ENCODE measurements at regions of chr12 and their contacts with region 1.

Region 1: DNA sequence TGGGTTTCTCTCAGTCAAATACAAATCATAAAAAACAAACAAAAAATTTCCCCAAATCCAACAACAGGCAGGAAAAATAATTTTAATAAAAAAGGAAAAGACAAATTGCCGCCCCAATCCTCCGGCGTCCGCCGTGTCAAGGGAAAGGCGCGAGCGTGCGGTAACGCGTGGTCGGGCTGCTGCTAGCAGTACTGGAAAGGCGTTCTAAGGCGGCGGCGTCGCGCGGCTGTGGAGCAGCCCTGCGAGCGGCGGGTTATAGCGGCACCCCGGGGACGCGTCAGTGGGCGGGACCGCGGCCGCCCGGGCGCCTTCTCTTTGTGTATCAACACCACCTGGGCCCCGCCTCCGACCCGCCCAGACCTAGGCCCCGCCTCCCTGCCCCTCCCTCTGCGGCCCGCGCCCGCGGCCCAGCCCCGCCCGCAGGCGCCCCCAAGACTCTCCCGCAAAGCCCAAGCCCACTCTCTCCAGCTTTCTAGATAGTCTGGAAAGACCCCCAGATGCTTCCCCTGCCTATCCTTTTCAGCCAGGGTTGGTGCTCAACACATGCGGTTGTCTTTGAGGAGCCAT is at the start of gene SLC38A2:
- DNase-seq: peak; percentile 96 to 99
- H3K4me3 ChIP-seq: peak within 1 kb of the TSS; percentile 83
- H3K4me3 Mint-ChIP-seq: peak within 1 kb of the TSS; percentile 76
- H3K27ac Mint-ChIP-seq: peak within 1 kb of the TSS; percentile 100
- H3K4me1 ChIP-seq: peaks cover 45% of the 10 kb centered on the region
- H3K4me1 Mint-ChIP-seq: peaks cover 35% of the 10 kb centered on the region
- H3K27me3 ChIP-seq: no peaks in the 10 kb centered on the region
- H3K27me3 Mint-ChIP-seq: no peaks in the 10 kb centered on the region
- CTCF ChIP-seq: no peak
- total RNA-seq, gene SLC38A2: 317 and 331 TPM in 2 replicates

Region 2: GRCh38 chr12:46332260-46332659 is 40.4 kb before region 1 on chr12:
- CTCF ChIA-PET with region 1: no interaction called
- POLR2A ChIA-PET with region 1: no interaction called
- intact Hi-C with region 1: no loop called
- DNase-seq: no peak
- H3K4me3 ChIP-seq: no peak overlapping the region
- H3K4me3 Mint-ChIP-seq: no peak overlapping the region
- H3K27ac Mint-ChIP-seq: no peak overlapping the region
- H3K4me1 ChIP-seq: no peaks in the 10 kb centered on the region
- H3K4me1 Mint-ChIP-seq: no peaks in the 10 kb centered on the region
- H3K27me3 ChIP-seq: no peaks in the 10 kb centered on the region
- H3K27me3 Mint-ChIP-seq: peaks cover 7% of the 10 kb centered on the region
- CTCF ChIP-seq: no peak

Region 3: GRCh38 chr12:46382964-46383653 is 10.5 kb after region 1 on chr12:
- CTCF ChIA-PET with region 1: no interaction called
- POLR2A ChIA-PET with region 1: interaction called, 5 read pairs
- intact Hi-C with region 1: loop called (anchors 1 kb)
- DNase-seq: peak; percentile 97 to 98
- H3K4me3 ChIP-seq: peak overlapping the region; percentile 94
- H3K4me3 Mint-ChIP-seq: peak overlapping the region; percentile 77
- H3K27ac Mint-ChIP-seq: peak overlapping the region; percentile 99
- H3K4me1 ChIP-seq: peaks cover 47% of the 10 kb centered on the region
- H3K4me1 Mint-ChIP-seq: peaks cover 38% of the 10 kb centered on the region
- H3K27me3 ChIP-seq: no peaks in the 10 kb centered on the region
- H3K27me3 Mint-ChIP-seq: no peaks in the 10 kb centered on the region
- CTCF ChIP-seq: peak in 1 of 2 experiments; percentile 17

Region 4: DNA sequence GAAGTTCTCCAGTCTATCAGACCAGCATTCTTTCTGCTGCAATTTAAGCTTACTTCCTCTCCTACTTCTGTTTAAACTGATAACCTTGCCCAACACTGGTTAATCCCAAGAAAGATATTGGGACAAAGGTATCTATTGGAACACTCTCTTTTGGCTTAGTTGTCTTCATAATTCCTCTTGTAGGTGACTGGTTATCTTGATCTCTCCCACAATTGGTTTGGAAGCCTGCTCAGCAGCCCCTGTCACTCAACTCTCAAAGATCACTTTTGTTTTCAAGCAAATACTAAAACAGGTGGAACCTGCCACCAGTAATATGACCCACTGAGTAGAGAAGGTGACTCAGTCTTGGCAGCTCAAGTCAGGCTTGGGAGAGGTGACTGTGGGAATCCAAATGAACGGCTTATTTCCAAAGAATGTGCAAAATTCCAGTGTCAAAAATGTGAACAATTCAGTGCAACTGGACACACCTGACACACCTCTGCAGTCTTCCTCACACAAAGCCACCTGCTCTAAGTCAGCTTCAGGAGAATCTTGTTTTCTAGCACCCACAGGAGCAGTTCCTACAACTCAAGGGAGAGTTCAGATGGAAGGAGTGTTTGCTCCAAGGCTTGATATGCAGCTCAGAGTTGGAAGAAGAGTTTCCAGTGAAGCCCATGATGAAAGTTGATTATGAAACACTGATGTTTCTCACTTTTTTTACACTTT is 83.2 kb after region 1 on chr12:
- CTCF ChIA-PET with region 1: no interaction called
- POLR2A ChIA-PET with region 1: interaction called, 4 read pairs
- intact Hi-C with region 1: loop called (anchors 1 kb)
- DNase-seq: peak; percentile 84 to 87
- H3K4me3 ChIP-seq: no peak overlapping the region
- H3K4me3 Mint-ChIP-seq: peak overlapping the region; percentile 32
- H3K27ac Mint-ChIP-seq: peak overlapping the region; percentile 65
- H3K4me1 ChIP-seq: peaks cover 58% of the 10 kb centered on the region
- H3K4me1 Mint-ChIP-seq: peaks cover 46% of the 10 kb centered on the region
- H3K27me3 ChIP-seq: no peaks in the 10 kb centered on the region
- H3K27me3 Mint-ChIP-seq: no peaks in the 10 kb centered on the region
- CTCF ChIP-seq: no peak

Region 5: DNA sequence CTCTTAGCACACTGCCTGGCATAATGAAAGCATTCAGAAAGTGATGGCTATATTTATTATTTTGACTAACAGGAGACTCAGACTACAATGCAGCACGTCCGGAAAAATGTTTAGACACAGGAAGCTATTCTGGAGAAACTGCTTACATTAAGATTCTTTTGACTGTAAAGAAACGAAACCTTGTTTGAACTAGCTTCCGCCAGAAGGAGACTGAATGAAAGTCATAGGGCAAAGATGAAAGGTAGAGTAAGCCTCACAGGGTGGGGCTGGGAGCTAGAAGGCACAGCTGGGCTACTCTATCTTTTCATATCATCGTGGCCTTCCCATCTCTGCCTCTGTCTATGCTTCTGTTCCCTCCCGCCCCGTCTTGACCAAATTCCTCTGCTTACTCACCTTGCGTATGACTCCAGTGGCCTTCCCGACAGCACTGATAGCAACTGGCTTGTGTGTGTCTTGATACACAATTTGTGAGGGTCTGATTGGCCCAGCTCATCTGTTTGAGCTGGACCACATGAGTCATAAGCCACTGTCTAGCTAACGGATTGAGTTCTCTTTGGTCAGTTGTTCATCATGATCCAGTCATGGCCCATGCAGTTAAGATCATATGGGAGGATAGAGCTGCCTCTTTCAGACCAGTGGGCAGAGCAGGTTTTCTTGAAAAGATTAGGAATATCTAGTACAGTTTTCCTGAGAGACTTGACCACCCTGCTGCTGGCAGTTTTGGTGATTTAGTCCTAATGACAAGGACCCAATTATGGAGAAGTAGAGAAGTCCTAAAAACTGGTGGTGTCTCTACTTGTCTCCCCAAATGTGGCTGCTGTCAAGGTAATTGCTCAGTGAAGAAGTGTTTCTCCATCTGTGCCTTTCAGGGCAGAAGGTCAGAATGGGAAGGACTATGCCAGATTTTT is 151.5 kb after region 1 on chr12:
- CTCF ChIA-PET with region 1: no interaction called
- POLR2A ChIA-PET with region 1: interaction called, 4 read pairs
- intact Hi-C with region 1: loop called (anchors 5 kb)
- DNase-seq: peak; percentile 53 to 80
- H3K4me3 ChIP-seq: no peak overlapping the region
- H3K4me3 Mint-ChIP-seq: peak overlapping the region; percentile 60
- H3K27ac Mint-ChIP-seq: peak overlapping the region; percentile 50
- H3K4me1 ChIP-seq: peaks cover 25% of the 10 kb centered on the region
- H3K4me1 Mint-ChIP-seq: peaks cover 26% of the 10 kb centered on the region
- H3K27me3 ChIP-seq: no peaks in the 10 kb centered on the region
- H3K27me3 Mint-ChIP-seq: no peaks in the 10 kb centered on the region
- CTCF ChIP-seq: no peak

Measured in Caco-2 (cell line).